ENCODE measurements at regions of chr16 and their contacts with region 1.

Region 1: GRCh38 chr16:56681939-56682702 is at the start of gene MT1X:
- DNase-seq: peak; percentile 95
- H3K4me3 Mint-ChIP-seq: peak within 1 kb of the TSS; percentile 92
- H3K27ac Mint-ChIP-seq: peak within 1 kb of the TSS; percentile 96
- H3K4me1 Mint-ChIP-seq: peaks cover 19% of the 10 kb centered on the region
- H3K27me3 Mint-ChIP-seq: no peaks in the 10 kb centered on the region
- total RNA-seq, gene MT1X: 49.9 to 57.9 TPM

Region 2: DNA sequence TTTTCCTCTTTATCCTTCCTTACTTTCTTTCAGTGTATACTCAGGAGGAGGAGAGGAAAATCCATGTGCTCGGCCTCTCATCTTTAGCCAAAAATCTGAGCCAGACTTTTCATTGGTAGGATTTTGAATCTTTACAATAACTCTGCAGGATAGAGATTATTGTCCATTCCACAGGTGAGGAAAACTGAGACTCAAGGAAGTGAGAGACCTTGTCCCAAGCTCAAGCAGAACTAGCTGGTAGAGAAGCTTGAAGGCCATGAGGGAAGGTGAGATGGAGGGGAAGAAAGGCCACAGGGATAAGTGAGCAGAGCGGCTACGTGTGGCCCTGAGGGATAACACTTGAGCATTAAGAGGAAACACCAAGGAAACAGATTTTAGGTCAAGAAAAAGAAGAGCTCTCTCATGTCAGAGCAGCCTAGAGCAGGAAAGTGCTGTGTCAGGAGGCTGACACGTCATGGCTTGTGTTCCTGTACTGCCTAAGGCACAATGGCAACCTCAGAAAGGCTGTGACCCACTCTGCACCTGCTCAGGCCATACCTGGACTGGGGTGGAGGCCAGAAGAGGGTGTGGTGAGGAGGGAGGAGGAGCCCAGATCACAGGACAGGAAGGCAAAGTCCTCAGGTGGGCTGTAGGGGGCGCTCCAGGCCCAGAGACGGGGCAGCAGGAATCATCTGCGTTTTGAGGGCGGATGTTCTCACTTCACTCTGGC is 105.4 kb before region 1 on chr16:
- CTCF ChIA-PET with region 1: interaction called, 5 read pairs
- intact Hi-C with region 1: loop called (anchors 1 kb)
- DNase-seq: peak; percentile 95
- H3K4me3 Mint-ChIP-seq: no peak overlapping the region
- H3K27ac Mint-ChIP-seq: peak overlapping the region; percentile 30
- H3K4me1 Mint-ChIP-seq: peaks cover 4% of the 10 kb centered on the region
- H3K27me3 Mint-ChIP-seq: no peaks in the 10 kb centered on the region

Region 3: GRCh38 chr16:56643080-56643778 is 38.9 kb before region 1 on chr16:
- CTCF ChIA-PET with region 1: interaction called, 6 read pairs
- intact Hi-C with region 1: loop called (anchors 1 kb)
- DNase-seq: peak; percentile 87
- H3K4me3 Mint-ChIP-seq: peak overlapping the region; percentile 46
- H3K27ac Mint-ChIP-seq: peak overlapping the region; percentile 9
- H3K4me1 Mint-ChIP-seq: peaks cover 21% of the 10 kb centered on the region
- H3K27me3 Mint-ChIP-seq: peaks cover 40% of the 10 kb centered on the region

Region 4: GRCh38 chr16:56667581-56668571 is 14.2 kb before region 1 on chr16 and contains the start of gene MT1G:
- CTCF ChIA-PET with region 1: no interaction called
- intact Hi-C with region 1: loop called (anchors 1 kb)
- DNase-seq: peak; percentile 40
- H3K4me3 Mint-ChIP-seq: peak within 1 kb of the TSS; percentile 46
- H3K27ac Mint-ChIP-seq: no peak within 1 kb of the TSS
- H3K4me1 Mint-ChIP-seq: peaks cover 21% of the 10 kb centered on the region
- H3K27me3 Mint-ChIP-seq: peaks cover 44% of the 10 kb centered on the region
- total RNA-seq, gene MT1G: 22.4 to 23.8 TPM

Measured in activated naive CD4-positive, alpha-beta T cell treated with anti-CD3 and anti-CD28 coated beads for 36 hours (primary cell).